Right ventricle myocardium inferior (tissue), 1 donor: ENCODE measurements at regions of chr3 and their contacts with region 1.

Region 1: GRCh38 chr3:58013973-58014649 is 5.9 kb downstream of the FLNB start:
- DNase-seq: no peak
- ATAC-seq: peak; percentile 77

Region 2: GRCh38 chr3:58049143-58049785 is 35.2 kb after region 1 on chr3:
- intact Hi-C with region 1: loop called (anchors 5 kb)
- DNase-seq: no peak
- ATAC-seq: peak; percentile 46

Region 3: GRCh38 chr3:58095603-58096224 is 81.6 kb after region 1 on chr3:
- intact Hi-C with region 1: loop called (anchors 5 kb)
- DNase-seq: no peak
- ATAC-seq: peak; percentile 56

Region 4: DNA sequence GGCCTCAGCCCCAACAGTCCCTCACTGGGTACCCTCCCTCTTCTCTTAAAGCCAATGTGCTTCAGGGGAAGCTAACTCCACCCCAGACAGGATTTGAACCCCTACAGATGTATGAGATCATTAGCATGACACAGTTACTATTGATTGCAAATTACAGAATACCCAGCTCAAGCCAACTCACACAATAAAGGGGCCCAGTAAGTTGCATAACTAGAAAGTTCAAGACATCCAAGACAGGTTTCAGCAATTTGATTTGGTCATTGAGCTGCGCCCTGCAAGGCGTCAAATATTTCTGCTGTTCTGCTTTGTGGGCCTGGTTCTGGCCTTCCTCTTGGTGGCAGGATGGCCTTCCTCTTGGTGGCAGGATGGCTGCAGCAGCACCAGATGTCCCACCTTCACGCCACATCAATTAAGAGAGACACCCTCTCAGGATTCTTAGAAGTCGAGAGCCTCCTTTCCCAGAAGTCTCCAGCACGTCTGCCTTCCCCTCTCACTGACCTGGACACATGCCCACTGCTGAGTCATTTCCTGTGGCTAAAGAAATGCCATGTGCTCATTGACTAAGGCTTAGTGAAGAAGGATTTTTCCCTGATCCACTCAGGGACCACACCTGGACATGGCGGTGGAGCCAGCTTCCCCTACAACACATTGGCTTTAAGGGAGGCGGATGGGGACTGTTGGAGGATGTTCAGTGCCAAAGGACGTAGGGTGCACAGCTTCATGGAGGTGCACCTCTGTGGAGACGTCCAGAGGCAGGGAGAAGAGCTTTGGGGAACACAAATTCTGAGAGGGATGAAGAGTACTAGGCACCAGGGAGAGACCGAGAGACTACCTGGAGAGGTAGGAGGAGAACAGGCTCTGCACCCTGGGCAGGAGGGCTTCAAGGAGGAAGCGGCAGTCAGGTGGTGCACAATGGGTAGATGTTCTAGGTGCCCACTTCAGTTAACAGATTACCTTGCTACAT is 147.6 kb after region 1 on chr3:
- intact Hi-C with region 1: no loop called
- DNase-seq: peak; percentile 77
- ATAC-seq: no peak